Ascending aorta (tissue), 2 donors: ENCODE measurements at regions of chr12 and their contacts with region 1.

Region 1: DNA sequence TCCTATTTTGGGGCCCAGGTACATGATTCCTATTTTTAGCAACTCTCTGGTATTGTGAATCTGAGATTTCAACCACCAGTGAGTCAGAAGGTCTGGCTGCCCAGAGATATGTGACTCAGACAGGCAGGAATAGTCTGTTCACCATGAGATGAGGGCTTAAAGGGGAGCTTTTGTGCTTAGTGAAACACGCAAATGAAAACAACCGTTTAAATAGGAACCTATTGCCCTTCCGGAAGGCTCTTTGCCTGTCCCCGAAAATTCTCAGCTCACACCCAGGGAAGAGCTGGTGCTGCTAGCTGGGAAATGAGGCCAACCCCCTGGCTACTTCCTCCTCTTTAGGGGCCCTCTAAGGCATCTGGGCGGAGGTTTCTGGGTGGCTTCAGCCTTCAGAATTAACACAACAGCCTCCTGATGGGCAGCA is 283.6 kb downstream of the CACNA1C start:
- DNase-seq: peak; percentile 56 to 89
- H3K4me3 ChIP-seq: peak overlapping the region in 1 of 2 donors; percentile 32
- H3K27ac ChIP-seq: peak overlapping the region; percentile 97 to 99
- H3K4me1 ChIP-seq: peaks cover 26 to 73% of the 10 kb centered on the region in 2 donors
- H3K27me3 ChIP-seq: no peaks in the 10 kb centered on the region
- CTCF ChIP-seq: no peak

Region 2: GRCh38 chr12:2301531-2302461 is 34.6 kb before region 1 on chr12:
- intact Hi-C with region 1: loop called (anchors 5 kb)
- DNase-seq: peak in 1 of 2 donors; percentile 90
- H3K4me3 ChIP-seq: peak overlapping the region; percentile 31 to 47
- H3K27ac ChIP-seq: peak overlapping the region; percentile 85 to 86
- H3K4me1 ChIP-seq: peaks cover 14 to 63% of the 10 kb centered on the region in 2 donors
- H3K27me3 ChIP-seq: no peaks in the 10 kb centered on the region
- CTCF ChIP-seq: no peak

Region 3: GRCh38 chr12:2387103-2387834 is 50.9 kb after region 1 on chr12:
- intact Hi-C with region 1: loop called (anchors 10 kb)
- DNase-seq: peak in 1 of 2 donors; percentile 65
- H3K4me3 ChIP-seq: no peak overlapping the region
- H3K27ac ChIP-seq: peak overlapping the region; percentile 84 to 91
- H3K4me1 ChIP-seq: peaks cover 13 to 45% of the 10 kb centered on the region in 2 donors
- H3K27me3 ChIP-seq: no peaks in the 10 kb centered on the region
- CTCF ChIP-seq: no peak

Region 4: GRCh38 chr12:2429032-2429431 is 92.6 kb after region 1 on chr12:
- intact Hi-C with region 1: loop called (anchors 5 kb)
- DNase-seq: peak in 1 of 2 donors; percentile 86
- H3K4me3 ChIP-seq: no peak overlapping the region
- H3K27ac ChIP-seq: peak overlapping the region; percentile 86
- H3K4me1 ChIP-seq: peaks cover 8 to 49% of the 10 kb centered on the region in 2 donors
- H3K27me3 ChIP-seq: no peaks in the 10 kb centered on the region
- CTCF ChIP-seq: no peak